ENCODE measurements at regions of chr7 and their contacts with region 1.

Region 1: DNA sequence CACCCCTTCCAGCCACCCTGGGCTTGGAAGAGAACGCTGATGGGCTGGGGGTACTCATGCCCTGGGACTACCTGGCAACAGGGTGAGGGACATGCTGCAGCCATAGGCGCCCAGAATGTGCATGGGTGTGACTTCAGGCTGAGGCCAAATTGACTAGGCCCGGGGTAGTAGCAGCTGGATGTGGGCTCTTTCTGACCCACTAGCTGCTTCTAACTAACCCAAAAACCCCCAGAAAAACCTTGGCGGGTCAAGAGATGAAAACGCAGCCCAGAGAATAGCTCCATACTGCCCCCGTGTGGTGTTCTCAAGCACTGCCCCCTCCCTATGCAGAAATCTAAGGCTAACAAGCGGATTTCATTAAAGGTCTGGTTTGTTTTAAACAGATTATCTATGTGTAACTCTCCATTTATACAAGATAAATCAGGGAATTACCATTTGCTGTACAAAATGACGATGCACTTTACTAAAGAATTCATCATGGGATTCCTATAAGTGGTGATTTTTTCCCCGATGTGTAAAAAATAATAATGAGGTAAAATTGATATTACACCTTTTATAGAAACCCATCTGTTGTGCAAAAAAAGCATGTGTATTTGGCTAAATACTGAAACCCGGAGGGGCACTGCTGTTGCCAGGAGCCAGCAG is 4.2 kb downstream of the SMARCD3 start:
- DNase-seq: peak in 5 of 9 experiments; percentile 44 to 79 (median 67)
- ATAC-seq: peak; percentile 30
- H3K4me3 ChIP-seq: no peak overlapping the region
- H3K4me3 Mint-ChIP-seq: peak overlapping the region; percentile 70
- H3K27ac ChIP-seq: no peak overlapping the region
- H3K27ac Mint-ChIP-seq: no peak overlapping the region
- H3K4me1 ChIP-seq: peaks cover 40% of the 10 kb centered on the region
- H3K4me1 Mint-ChIP-seq: peaks cover 41% of the 10 kb centered on the region
- H3K27me3 ChIP-seq: peaks cover 0 to 19% of the 10 kb centered on the region in 2 experiments
- H3K27me3 Mint-ChIP-seq: peaks cover 2% of the 10 kb centered on the region
- CTCF ChIP-seq: peak; percentile 72

Region 2: GRCh38 chr7:151123822-151124464 is 120.4 kb before region 1 on chr7:
- CTCF ChIA-PET with region 1: interaction called, 8 read pairs
- POLR2A ChIA-PET with region 1: no interaction called
- intact Hi-C with region 1: loop called (anchors 1 kb)
- DNase-seq: peak; percentile 69 to 88 (median 81)
- ATAC-seq: peak; percentile 99
- H3K4me3 ChIP-seq: no peak overlapping the region
- H3K4me3 Mint-ChIP-seq: no peak overlapping the region
- H3K27ac ChIP-seq: no peak overlapping the region
- H3K27ac Mint-ChIP-seq: no peak overlapping the region
- H3K4me1 ChIP-seq: no peaks in the 10 kb centered on the region
- H3K4me1 Mint-ChIP-seq: no peaks in the 10 kb centered on the region
- H3K27me3 ChIP-seq: no peaks in the 10 kb centered on the region
- H3K27me3 Mint-ChIP-seq: peaks cover 2% of the 10 kb centered on the region
- CTCF ChIP-seq: peak; percentile 93

Region 3: GRCh38 chr7:151172273-151173141 is 71.8 kb before region 1 on chr7:
- CTCF ChIA-PET with region 1: interaction called, 4 read pairs
- POLR2A ChIA-PET with region 1: no interaction called
- intact Hi-C with region 1: loop called (anchors 1 to 2 kb)
- DNase-seq: peak; percentile 52 to 88 (median 78)
- ATAC-seq: peak; percentile 87
- H3K4me3 ChIP-seq: no peak overlapping the region
- H3K4me3 Mint-ChIP-seq: no peak overlapping the region
- H3K27ac ChIP-seq: no peak overlapping the region
- H3K27ac Mint-ChIP-seq: no peak overlapping the region
- H3K4me1 ChIP-seq: peaks cover 5% of the 10 kb centered on the region
- H3K4me1 Mint-ChIP-seq: peaks cover 10% of the 10 kb centered on the region
- H3K27me3 ChIP-seq: peaks cover 0 to 12% of the 10 kb centered on the region in 2 experiments
- H3K27me3 Mint-ChIP-seq: peaks cover 62% of the 10 kb centered on the region
- CTCF ChIP-seq: peak; percentile 100

Region 4: GRCh38 chr7:151226875-151227782 is 17.2 kb before region 1 on chr7 and contains the start of gene ABCF2:
- CTCF ChIA-PET with region 1: interaction called, 37 read pairs
- POLR2A ChIA-PET with region 1: interaction called, 16 read pairs
- intact Hi-C with region 1: loop called (anchors 1 kb)
- DNase-seq: peak; percentile 94 to 99 (median 98)
- ATAC-seq: peak; percentile 98
- H3K4me3 ChIP-seq: peak within 1 kb of the TSS; percentile 69 to 84
- H3K4me3 Mint-ChIP-seq: peak within 1 kb of the TSS; percentile 100
- H3K27ac ChIP-seq: peak within 1 kb of the TSS; percentile 67 to 79
- H3K27ac Mint-ChIP-seq: peak within 1 kb of the TSS; percentile 97
- H3K4me1 ChIP-seq: peaks cover 27% of the 10 kb centered on the region
- H3K4me1 Mint-ChIP-seq: peaks cover 48% of the 10 kb centered on the region
- H3K27me3 ChIP-seq: no peaks in the 10 kb centered on the region
- H3K27me3 Mint-ChIP-seq: no peaks in the 10 kb centered on the region
- CTCF ChIP-seq: no peak
- total RNA-seq, gene ABCF2: 12.7 to 16.5 TPM

Region 5: DNA sequence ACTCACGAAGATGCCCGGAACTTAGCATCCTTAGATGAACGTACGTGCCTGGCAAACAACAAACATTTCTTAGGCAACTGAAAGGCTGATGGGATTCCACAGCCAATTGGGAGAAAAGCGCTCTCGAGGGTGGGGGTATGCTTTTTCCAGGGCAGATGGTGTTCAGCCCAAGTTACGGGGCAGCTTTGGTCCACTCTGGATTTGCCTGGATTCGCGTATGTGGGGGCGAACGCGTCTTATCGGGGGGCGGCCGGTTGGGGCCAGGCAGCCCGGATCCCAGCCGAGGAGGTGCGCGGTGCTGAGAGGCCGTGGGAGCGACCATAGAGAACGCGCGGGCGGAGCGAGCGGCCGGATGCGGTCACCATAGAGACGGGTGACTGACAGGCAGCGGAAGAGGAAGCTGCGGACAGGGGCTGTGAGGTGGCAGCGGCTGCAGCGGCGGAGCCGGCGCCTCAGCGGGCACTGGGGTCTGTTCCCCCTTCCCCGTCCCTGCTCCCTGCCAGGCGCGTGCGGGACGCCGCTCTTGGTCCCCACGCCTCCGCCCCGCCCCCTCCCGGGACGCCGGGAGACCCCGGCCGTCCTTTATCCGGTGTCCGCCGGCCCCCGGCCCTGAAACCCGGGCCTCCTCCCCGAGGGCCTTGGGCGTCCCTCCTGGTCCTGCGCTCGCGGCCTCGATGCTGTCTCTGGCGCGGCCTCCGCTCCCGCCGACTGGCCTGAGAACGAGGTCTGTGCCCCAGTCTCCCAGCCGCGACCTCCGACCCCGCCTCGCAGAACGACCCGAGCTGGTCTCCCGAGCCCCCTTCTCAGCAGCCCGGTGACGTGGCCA is 12.0 kb before region 1 on chr7 and contains the start of gene CHPF2:
- CTCF ChIA-PET with region 1: interaction called, 37 read pairs
- POLR2A ChIA-PET with region 1: interaction called, 16 read pairs
- intact Hi-C with region 1: loop called (anchors 1 kb)
- DNase-seq: peak; percentile 71 to 94 (median 92)
- ATAC-seq: peak; percentile 74
- H3K4me3 ChIP-seq: peak within 1 kb of the TSS; percentile 76 to 96
- H3K4me3 Mint-ChIP-seq: peak within 1 kb of the TSS; percentile 100
- H3K27ac ChIP-seq: peak within 1 kb of the TSS; percentile 54 to 59
- H3K27ac Mint-ChIP-seq: peak within 1 kb of the TSS; percentile 98
- H3K4me1 ChIP-seq: peaks cover 22% of the 10 kb centered on the region
- H3K4me1 Mint-ChIP-seq: peaks cover 35% of the 10 kb centered on the region
- H3K27me3 ChIP-seq: no peaks in the 10 kb centered on the region
- H3K27me3 Mint-ChIP-seq: no peaks in the 10 kb centered on the region
- CTCF ChIP-seq: no peak
- total RNA-seq, gene CHPF2: 24.7 to 24.9 TPM

Region 6: DNA sequence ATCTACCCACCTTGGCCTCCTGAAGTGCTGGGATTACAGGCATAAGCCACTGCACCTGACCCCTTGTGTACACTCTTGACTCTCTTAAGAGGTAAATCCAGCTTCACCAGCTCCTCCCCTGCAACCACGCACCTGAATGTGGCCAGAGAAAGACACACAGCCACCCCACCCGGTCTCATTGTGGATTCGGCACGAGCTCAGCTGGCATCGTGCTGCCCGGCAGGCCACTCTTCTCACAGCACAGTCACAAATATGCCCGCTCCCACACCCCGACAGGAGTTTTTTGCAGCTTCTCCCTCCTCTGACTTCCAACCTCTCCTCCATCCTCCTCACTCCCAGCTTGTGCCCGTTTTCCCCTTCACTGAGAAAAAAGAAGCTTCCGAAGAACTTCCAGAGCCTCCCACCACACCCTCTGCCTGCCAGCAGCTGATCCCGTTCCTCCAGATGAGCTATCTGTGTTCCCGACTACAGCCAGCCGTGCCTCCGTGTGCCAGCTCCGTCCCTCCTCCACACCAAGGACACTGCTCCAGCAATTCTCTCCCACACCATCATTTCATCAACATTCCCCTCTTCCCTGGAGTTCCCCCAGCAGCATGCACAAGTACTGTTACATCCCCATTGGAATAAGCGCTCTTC is 12.2 kb after region 1 on chr7:
- CTCF ChIA-PET with region 1: interaction called, 23 read pairs
- POLR2A ChIA-PET with region 1: no interaction called
- intact Hi-C with region 1: no loop called
- DNase-seq: no peak
- ATAC-seq: no peak
- H3K4me3 ChIP-seq: no peak overlapping the region
- H3K4me3 Mint-ChIP-seq: no peak overlapping the region
- H3K27ac ChIP-seq: no peak overlapping the region
- H3K27ac Mint-ChIP-seq: no peak overlapping the region
- H3K4me1 ChIP-seq: peaks cover 5% of the 10 kb centered on the region
- H3K4me1 Mint-ChIP-seq: peaks cover 6% of the 10 kb centered on the region
- H3K27me3 ChIP-seq: peaks cover 0 to 7% of the 10 kb centered on the region in 2 experiments
- H3K27me3 Mint-ChIP-seq: peaks cover 14% of the 10 kb centered on the region
- CTCF ChIP-seq: no peak

Region 7: DNA sequence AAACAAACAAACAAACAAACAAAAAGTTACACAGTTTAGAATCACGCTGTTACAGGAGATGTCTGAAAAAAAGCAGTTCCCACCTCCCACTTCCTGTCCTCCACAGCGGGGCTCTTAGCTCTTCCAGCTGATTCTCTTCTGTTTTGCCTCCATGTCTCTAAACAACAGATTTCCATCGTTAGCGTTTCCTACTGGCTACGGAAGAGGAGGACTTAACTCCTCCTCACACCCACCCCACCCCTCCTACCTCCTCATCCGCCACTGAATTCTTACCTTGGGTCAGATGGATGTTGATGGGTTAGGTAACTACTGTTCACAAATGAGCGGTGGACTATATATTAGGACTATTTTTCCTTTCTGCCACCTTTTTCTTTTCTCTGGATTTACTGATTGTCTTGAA is 60.5 kb after region 1 on chr7:
- CTCF ChIA-PET with region 1: interaction called, 23 read pairs
- POLR2A ChIA-PET with region 1: no interaction called
- intact Hi-C with region 1: loop called (anchors 1 kb)
- DNase-seq: no peak
- ATAC-seq: no peak
- H3K4me3 ChIP-seq: no peak overlapping the region
- H3K4me3 Mint-ChIP-seq: no peak overlapping the region
- H3K27ac ChIP-seq: no peak overlapping the region
- H3K27ac Mint-ChIP-seq: no peak overlapping the region
- H3K4me1 ChIP-seq: peaks cover 8% of the 10 kb centered on the region
- H3K4me1 Mint-ChIP-seq: peaks cover 6% of the 10 kb centered on the region
- H3K27me3 ChIP-seq: peaks cover 0 to 14% of the 10 kb centered on the region in 2 experiments
- H3K27me3 Mint-ChIP-seq: peaks cover 38% of the 10 kb centered on the region
- CTCF ChIP-seq: no peak

Region 8: DNA sequence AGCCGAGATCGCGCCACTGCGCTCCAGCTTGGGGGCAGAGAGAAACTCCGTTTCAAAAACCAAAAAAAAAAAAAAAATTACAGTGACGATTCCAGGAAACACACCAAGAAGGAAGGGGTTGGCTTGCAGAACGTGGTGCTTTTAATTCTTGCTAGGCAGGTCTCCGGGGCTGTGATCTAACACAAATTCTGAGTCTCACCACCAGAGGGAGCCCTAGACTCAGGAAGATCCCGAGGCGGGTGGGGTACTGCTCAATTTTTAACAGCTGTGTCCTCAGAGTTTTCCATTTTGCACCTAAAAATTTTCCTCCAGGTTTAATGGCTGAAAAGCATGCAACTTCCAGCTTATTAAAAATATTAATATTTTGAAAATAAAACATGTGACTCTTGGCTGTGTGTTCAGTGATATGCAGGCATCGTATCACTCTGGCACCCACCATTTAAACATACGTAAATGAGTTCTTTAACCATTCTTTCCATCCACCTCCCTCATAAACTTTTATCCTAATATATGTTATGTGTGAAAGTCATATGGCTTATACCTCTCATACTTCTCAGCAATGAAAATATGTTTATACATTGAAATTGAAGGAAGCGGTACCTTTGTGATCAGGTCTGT is 70.8 kb after region 1 on chr7:
- CTCF ChIA-PET with region 1: no interaction called
- POLR2A ChIA-PET with region 1: no interaction called
- intact Hi-C with region 1: no loop called
- DNase-seq: peak; percentile 63 to 89 (median 82)
- ATAC-seq: peak; percentile 95
- H3K4me3 ChIP-seq: no peak overlapping the region
- H3K4me3 Mint-ChIP-seq: no peak overlapping the region
- H3K27ac ChIP-seq: no peak overlapping the region
- H3K27ac Mint-ChIP-seq: no peak overlapping the region
- H3K4me1 ChIP-seq: peaks cover 4% of the 10 kb centered on the region
- H3K4me1 Mint-ChIP-seq: peaks cover 6% of the 10 kb centered on the region
- H3K27me3 ChIP-seq: peaks cover 0 to 4% of the 10 kb centered on the region in 2 experiments
- H3K27me3 Mint-ChIP-seq: no peaks in the 10 kb centered on the region
- CTCF ChIP-seq: peak; percentile 88

Measured in CD8-positive, alpha-beta T cell (primary cell).